ENCODE measurements at regions of chr1 and their contacts with region 1.

Region 1: GRCh38 chr1:165871311-165872067 is 44.1 kb downstream of the UCK2 start:
- DNase-seq: no peak
- ATAC-seq: no peak; the same call in 1 of the 2 replicates
- H3K4me3 ChIP-seq: no peak overlapping the region
- H3K27ac ChIP-seq: no peak overlapping the region
- H3K4me1 ChIP-seq: peaks cover 8% of the 10 kb centered on the region; the same call in 1 of the 2 replicates
- H3K27me3 ChIP-seq: no peaks in the 10 kb centered on the region
- CTCF ChIP-seq: peak; percentile 22; the same call in 1 of the 2 replicates

Region 2: GRCh38 chr1:165768513-165769394 is 102.7 kb before region 1 on chr1 and contains the start of gene TMCO1:
- CTCF ChIA-PET with region 1: no interaction called
- POLR2A ChIA-PET with region 1: interaction called, 26 read pairs
- in situ Hi-C with region 1: no loop called
- intact Hi-C with region 1: no loop called
- DNase-seq: peak; percentile 92
- ATAC-seq: peak; percentile 99
- H3K4me3 ChIP-seq: peak within 1 kb of the TSS; percentile 78 to 94
- H3K27ac ChIP-seq: peak within 1 kb of the TSS; percentile 96
- H3K4me1 ChIP-seq: peaks cover 15% of the 10 kb centered on the region
- H3K27me3 ChIP-seq: no peaks in the 10 kb centered on the region
- CTCF ChIP-seq: no peak
- total RNA-seq, gene TMCO1: 103 TPM

Region 3: DNA sequence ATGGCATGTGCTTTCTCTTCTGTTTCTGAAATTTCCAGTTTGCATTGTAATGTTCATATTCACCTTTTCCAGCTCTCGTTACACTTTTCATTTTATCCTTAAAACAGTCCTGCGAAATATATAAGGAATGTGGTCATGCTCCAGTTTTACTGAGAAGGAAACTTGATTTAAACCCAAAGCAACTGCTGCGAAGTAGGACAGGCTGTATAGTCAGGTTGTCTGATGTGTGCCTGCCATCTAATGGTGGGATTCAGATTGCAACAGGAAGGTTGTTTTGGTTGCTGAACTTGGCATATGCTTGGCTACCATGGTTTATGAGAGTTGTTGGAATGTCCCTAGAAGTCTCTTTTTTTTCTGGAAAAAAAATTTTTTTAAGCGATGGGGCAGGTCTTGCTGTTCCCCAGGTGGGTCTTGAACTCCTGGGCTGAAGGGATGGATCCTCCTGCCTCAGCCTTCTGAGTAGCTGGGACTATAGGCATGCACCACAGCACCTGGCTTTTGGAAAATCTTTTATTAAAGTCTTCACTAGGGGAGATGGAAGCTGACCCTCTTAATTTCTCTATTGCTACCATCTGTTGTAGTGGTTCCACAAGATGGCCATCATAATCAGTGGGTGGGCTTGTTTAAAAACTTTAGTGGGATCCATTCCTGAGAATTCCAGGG is 42.8 kb after region 1 on chr1:
- CTCF ChIA-PET with region 1: no interaction called
- POLR2A ChIA-PET with region 1: no interaction called
- in situ Hi-C with region 1: no loop called
- intact Hi-C with region 1: no loop called
- DNase-seq: peak; percentile 67
- ATAC-seq: peak; percentile 84
- H3K4me3 ChIP-seq: no peak overlapping the region
- H3K27ac ChIP-seq: no peak overlapping the region
- H3K4me1 ChIP-seq: no peaks in the 10 kb centered on the region
- H3K27me3 ChIP-seq: no peaks in the 10 kb centered on the region
- CTCF ChIP-seq: peak; percentile 84

Region 4: GRCh38 chr1:166080967-166081870 is 209.7 kb after region 1 on chr1:
- CTCF ChIA-PET with region 1: no interaction called
- POLR2A ChIA-PET with region 1: no interaction called
- in situ Hi-C with region 1: no loop called
- intact Hi-C with region 1: no loop called
- DNase-seq: no peak
- ATAC-seq: no peak
- H3K4me3 ChIP-seq: no peak overlapping the region
- H3K27ac ChIP-seq: no peak overlapping the region
- H3K4me1 ChIP-seq: no peaks in the 10 kb centered on the region
- H3K27me3 ChIP-seq: no peaks in the 10 kb centered on the region
- CTCF ChIP-seq: no peak

Region 5: GRCh38 chr1:166307261-166308188 is 436.0 kb after region 1 on chr1:
- CTCF ChIA-PET with region 1: no interaction called
- POLR2A ChIA-PET with region 1: no interaction called
- in situ Hi-C with region 1: no loop called
- intact Hi-C with region 1: no loop called
- DNase-seq: no peak
- ATAC-seq: no peak
- H3K4me3 ChIP-seq: no peak overlapping the region
- H3K27ac ChIP-seq: no peak overlapping the region
- H3K4me1 ChIP-seq: no peaks in the 10 kb centered on the region
- H3K27me3 ChIP-seq: no peaks in the 10 kb centered on the region
- CTCF ChIP-seq: no peak